HEK293T (cell line): ENCODE measurements at regions of chr10 and their contacts with region 1.

Region 1: DNA sequence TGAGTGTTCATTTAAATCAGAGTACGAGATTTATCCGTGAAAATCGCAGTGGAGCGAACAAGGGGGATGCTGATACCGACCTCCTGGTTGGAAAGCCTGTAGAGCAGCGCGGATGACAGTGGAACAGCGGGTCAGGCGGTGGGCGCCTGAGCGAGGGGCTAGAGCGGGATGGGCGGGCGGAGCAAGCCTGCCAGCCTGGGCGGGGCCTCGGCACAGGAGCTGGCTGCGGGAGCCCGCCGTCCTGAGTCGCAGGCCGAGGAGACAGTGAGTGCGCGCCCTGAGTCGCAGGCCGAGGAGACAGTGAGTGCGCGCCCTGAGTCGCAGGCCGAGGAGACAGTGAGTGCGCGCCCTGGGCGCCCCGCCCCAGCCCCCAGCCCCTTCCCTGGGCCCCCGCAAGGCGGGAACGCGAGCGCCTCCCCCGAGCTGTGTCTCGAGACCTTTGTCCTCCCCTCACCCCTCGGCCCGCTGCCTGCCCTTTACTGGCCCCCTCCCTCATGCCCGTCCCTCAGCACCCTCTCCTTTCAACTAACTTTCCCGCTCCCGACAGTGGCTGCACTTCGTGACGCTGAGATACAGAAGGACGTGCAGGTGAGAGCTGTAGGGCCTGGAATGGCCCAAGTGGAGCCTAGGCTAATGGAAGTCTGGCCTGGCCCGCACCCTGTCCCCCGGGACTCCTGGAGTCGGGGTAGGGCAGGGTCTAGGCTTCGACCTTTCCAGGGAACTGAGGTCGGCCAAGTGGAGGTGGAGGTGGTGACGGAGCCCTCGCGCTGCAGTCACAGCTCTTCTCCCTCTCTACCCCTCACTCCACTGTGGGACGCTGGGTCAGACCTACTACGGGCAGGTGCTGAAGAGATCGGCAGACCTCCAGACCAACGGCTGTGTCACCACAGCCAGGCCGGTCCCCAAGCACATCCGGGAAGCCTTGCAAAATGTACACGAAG is at the start of gene AS3MT:
- DNase-seq: peak; percentile 80

Region 2: DNA sequence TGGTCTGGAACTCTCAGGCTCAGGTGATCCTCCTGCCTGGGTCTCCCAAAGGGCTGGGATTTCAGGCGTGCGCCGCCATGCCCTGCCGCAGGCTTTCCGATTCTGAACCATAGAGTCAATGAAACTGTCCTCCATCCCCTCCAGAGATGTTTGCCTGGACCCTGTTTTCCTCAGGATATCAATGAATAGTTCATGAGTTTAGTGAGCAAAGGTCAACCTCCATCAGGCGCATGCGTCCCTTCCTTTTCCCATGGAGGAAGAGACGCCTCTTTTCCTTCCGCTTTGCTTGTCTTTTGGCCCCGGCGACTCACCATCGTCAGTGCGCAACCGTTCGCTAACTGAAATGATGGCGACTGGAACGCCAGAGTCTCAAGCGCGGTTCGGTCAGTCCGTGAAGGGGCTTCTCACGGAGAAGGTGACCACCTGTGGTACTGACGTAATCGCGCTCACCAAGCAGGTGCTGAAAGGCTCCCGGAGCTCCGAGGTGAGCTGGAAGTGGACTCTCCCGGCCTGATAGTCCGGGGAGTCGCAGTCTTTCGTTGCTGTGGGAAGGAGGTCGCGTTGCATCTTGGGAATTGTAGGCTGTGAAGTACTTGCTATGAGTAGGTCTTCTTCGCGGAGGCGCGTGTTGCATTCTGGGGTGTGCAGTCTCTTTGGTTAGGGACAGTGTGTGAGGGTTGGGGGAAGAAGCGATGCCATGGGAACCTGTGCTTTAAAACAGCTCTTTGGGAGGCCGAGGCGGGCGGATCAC is 15.4 kb before region 1 on chr10 and contains the start of gene BORCS7:
- CTCF ChIA-PET with region 1: no interaction called
- POLR2A ChIA-PET with region 1: interaction called, 30 read pairs
- DNase-seq: peak; percentile 96